OCI-LY7 (cell line): ENCODE measurements at regions of chr11 and their contacts with region 1.

Region 1: DNA sequence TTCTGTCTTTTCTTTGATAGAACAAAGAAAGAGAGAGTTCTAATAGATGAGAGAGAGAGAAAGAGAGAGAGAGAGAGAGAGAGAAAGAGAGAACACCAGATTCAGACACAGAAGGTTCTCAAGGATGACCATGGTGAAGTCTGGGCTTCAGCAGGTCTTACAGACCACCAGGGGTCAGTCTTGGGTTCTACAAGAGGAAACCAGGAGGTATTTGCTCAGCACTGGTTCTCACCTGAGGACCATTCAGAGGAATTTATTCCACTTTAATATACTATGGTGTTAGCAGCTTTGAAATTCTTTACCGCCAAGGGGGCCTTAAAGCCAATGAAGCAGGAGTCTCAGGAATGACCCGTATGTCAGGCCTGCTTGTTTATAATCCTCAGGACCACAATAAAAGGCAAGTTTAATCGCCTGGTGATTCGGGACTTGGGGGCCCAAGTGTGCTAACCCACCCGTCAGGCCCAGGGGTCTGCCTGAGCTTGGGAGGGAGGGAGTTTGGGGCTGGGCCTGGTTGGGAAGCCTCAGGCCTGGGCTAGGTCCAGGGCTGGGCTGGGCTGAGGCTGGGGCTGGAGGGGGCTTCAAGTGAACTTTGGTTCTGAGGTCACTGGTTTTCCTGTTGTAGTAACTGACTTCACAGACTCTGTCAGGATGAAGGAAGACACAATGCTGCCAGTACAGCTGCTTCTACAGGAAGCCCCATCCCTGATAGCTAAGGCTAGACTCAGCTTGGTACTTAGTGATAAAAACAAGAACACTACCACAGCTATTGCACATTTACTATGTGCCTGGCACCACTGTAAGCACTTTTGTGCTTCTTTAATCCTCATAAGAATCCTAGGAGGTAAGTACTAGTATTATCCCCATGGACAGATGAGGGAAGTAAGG is 179.2 kb upstream of the ZBED5 start:
- DNase-seq: peak; percentile 76
- H3K4me3 ChIP-seq: no peak overlapping the region
- H3K27ac ChIP-seq: no peak overlapping the region
- H3K4me1 ChIP-seq: no peaks in the 10 kb centered on the region
- CTCF ChIP-seq: peak; percentile 83

Region 2: GRCh38 chr11:11157185-11157584 is 120.1 kb after region 1 on chr11:
- CTCF ChIA-PET with region 1: no interaction called
- POLR2A ChIA-PET with region 1: no interaction called
- intact Hi-C with region 1: loop called (anchors 5 kb)
- DNase-seq: peak; percentile 40
- H3K4me3 ChIP-seq: no peak overlapping the region
- H3K27ac ChIP-seq: no peak overlapping the region
- H3K4me1 ChIP-seq: no peaks in the 10 kb centered on the region
- CTCF ChIP-seq: peak; percentile 72